K562 (cell line): ENCODE measurements at regions of chr6 and their contacts with region 1.

Region 1: GRCh38 chr6:4848382-4849068 is 72.3 kb downstream of the CDYL start:
- DNase-seq: peak in 3 of 4 experiments; percentile 36 to 73 (median 49)
- ATAC-seq: peak; percentile 94
- H3K4me3 ChIP-seq: no peak overlapping the region
- H3K27ac ChIP-seq: no peak overlapping the region
- H3K4me1 ChIP-seq: peaks cover under 1 to 17% of the 10 kb centered on the region in 2 experiments; a peak in 4 of 5 replicates
- H3K27me3 ChIP-seq: no peaks in the 10 kb centered on the region
- CTCF ChIP-seq: peak; percentile 74 to 81 (median 74)
- EP300 ChIP-seq: no peak
- POLR2A ChIP-seq: no peak
- RAD21 ChIP-seq: peak; percentile 69 to 88

Region 2: DNA sequence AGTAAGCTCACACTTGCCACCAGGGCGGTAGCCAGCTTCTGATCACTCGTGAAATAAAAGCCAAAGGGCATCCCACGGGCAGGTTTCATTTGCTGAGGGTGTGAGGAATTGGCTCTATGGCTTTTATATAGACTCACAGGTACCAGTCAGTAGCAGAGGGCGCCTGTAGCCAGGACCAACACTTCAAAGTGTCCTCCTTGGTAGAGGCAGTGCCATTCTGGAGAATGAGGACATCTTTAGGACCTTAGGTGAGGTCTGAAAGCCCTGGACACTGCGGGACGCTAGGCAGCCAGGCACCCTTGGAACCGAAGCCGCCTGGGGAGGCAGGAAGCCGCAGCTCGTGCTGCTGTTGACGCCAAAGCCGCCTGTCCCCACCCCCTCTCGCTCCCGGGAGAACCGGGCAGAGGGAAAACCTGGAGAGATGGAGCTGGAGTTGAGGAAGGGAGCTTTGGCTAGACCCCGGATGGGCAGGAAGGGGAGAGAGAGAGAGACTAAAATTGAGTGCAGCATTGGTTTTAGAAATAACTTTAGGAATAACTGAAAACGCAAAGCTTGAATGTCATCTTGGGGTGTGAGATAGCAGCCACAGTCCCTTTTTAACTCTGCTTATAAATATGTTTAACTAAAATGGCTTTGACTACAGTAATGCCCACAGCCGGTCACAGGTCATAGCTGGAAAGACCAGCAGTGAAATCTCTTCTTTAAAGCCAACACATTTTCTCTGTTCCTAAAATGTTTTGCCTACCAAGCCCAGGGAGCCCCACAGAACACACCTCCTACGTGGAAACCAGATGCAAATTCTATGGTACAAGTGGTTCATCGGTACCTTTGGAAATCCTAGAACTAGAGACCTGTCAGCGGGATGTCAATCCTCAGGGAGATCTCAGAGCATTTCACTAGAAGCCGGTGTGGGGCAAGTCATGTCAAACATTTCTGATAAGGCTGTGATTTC is 200.8 kb before region 1 on chr6:
- CTCF ChIA-PET with region 1: no interaction called
- POLR2A ChIA-PET with region 1: no interaction called
- in situ Hi-C with region 1: no loop called
- intact Hi-C with region 1: loop called (anchors 5 kb)
- DNase-seq: peak; percentile 87 to 90 (median 87)
- ATAC-seq: peak; percentile 97
- H3K4me3 ChIP-seq: peak overlapping the region; percentile 0; the same call in 1 of the 2 replicates
- H3K27ac ChIP-seq: peak overlapping the region; percentile 51; the same call in 2 of the 3 replicates
- H3K4me1 ChIP-seq: peaks cover 6 to 7% of the 10 kb centered on the region in 2 experiments; a peak in 4 of 5 replicates
- H3K27me3 ChIP-seq: no peaks in the 10 kb centered on the region; a peak in 1 of 5 replicates
- CTCF ChIP-seq: no peak
- EP300 ChIP-seq: peak; percentile 72
- POLR2A ChIP-seq: no peak
- RAD21 ChIP-seq: peak; percentile 29 to 57